Activated T-helper 2 cell treated with anti-CD3 and anti-CD28 coated beads, Interferon-gamma antibody, Interleukin-2, Interleukin-4, amounts not matched to agents 10 μg/mL and 5 μg/mL and 100 μg/mL, durations not matched to agents 14 hours and 24 hours and 36 hours (primary cell): ENCODE measurements at regions of chr6 and their contacts with region 1.

Region 1: GRCh38 chr6:116680975-116681808 is at the start of gene KPNA5:
- DNase-seq: peak; percentile 86
- H3K4me3 Mint-ChIP-seq: peak within 1 kb of the TSS; percentile 92
- H3K27ac Mint-ChIP-seq: peak within 1 kb of the TSS; percentile 95
- H3K4me1 Mint-ChIP-seq: peaks cover 21% of the 10 kb centered on the region
- H3K27me3 Mint-ChIP-seq: no peaks in the 10 kb centered on the region
- total RNA-seq, gene KPNA5: 6.3 and 7.4 TPM in 2 replicates

Region 2: GRCh38 chr6:116667623-116668022 is 13.6 kb before region 1 on chr6:
- intact Hi-C with region 1: loop called (anchors 1 kb)
- DNase-seq: no peak
- H3K4me3 Mint-ChIP-seq: peak overlapping the region; percentile 99
- H3K27ac Mint-ChIP-seq: peak overlapping the region; percentile 95
- H3K4me1 Mint-ChIP-seq: peaks cover 34% of the 10 kb centered on the region
- H3K27me3 Mint-ChIP-seq: peaks cover 19% of the 10 kb centered on the region

Region 3: DNA sequence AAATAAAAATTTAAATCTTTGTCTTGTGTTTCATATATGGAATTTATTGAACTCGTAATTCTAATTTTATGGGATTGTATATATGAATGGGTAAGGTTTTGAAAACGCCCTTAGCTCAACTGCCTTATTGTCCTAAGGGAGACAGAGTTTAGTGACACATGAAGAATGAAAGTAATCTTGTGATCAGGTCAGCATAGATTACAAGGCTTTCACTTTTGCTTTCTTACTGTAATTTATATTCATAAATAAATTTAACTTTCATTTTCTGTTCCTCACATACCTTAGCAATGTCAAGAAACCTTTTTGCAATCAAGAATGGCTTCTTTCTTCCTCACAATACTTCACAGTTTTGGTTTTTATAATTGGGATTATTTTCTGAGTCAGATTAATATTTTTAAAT is 14.2 kb after region 1 on chr6:
- intact Hi-C with region 1: loop called (anchors 1 kb)
- DNase-seq: no peak
- H3K4me3 Mint-ChIP-seq: no peak overlapping the region
- H3K27ac Mint-ChIP-seq: no peak overlapping the region
- H3K4me1 Mint-ChIP-seq: peaks cover 24% of the 10 kb centered on the region
- H3K27me3 Mint-ChIP-seq: no peaks in the 10 kb centered on the region

Region 4: GRCh38 chr6:117072134-117072533 is 390.9 kb after region 1 on chr6:
- intact Hi-C with region 1: no loop called
- DNase-seq: no peak
- H3K4me3 Mint-ChIP-seq: no peak overlapping the region
- H3K27ac Mint-ChIP-seq: no peak overlapping the region
- H3K4me1 Mint-ChIP-seq: no peaks in the 10 kb centered on the region
- H3K27me3 Mint-ChIP-seq: no peaks in the 10 kb centered on the region